ENCODE measurements at regions of chr12 and their contacts with region 1.

Region 1: DNA sequence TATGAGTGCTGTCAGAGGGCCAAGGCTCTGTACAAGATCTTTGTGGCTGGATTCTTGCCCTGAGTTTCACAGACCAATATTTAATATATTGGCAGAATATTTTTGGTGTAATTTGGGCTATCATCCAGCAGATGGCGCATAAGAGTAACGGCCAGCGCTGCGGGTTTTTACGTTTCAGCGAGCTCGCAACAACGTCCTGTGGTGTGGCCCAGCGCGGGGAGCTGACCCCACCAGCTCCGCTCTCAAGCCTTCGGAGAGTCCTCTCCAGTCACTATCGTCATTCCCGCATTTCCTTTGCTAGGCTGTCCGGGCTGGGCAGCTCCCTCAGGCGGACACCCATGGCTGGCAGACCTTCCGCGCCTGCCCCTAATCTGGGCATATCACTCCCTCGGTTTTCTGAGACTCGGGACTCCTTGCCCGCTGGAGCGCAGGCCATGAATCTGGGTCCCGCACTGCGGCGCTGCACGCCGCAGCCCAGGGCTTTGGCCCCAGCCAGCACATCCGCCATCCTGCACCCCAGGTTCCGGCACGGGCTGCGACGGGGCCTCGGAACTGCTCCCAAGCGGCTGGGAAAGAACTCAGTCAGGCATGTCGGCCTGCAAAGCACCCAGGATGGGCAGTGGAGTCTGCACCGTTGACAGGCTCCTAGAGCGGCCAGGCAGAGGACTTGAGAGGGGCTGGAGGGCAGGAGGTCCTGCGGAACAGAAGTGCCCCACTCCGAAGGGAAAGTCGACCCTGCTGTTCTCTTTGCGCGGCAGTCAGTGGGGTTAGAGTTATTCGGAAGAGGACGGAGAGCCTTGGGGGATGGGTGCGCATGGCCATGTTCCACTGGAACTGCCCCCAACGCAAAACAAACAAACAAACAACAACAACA is 18.4 kb downstream of the OLR1 start:
- DNase-seq: peak; percentile 75
- ATAC-seq: peak; percentile 83
- H3K4me3 Mint-ChIP-seq: peak overlapping the region; percentile 84
- H3K27ac Mint-ChIP-seq: peak overlapping the region; percentile 79
- H3K4me1 Mint-ChIP-seq: peaks cover 10% of the 10 kb centered on the region
- H3K27me3 Mint-ChIP-seq: peaks cover 18% of the 10 kb centered on the region

Region 2: DNA sequence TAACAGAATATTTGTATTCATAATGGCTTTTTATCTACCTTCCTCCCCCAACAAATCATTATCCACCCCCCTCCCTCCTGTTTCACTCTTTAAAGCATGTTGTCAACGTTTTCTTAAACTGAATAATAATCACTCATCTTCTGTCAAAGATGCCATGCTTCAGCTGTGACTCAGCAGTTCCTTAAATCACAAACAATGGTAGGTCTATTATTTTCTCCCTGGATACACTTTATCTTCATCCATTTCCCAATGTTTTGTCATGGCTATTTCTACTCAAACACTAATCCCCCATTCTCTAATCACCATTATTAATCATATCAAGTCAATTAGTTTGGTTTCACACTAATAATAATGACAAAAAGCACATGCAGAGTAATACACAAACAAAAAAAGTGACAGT is 136.6 kb before region 1 on chr12:
- CTCF ChIA-PET with region 1: no interaction called
- DNase-seq: no peak
- ATAC-seq: no peak
- H3K4me3 Mint-ChIP-seq: no peak overlapping the region
- H3K27ac Mint-ChIP-seq: no peak overlapping the region
- H3K4me1 Mint-ChIP-seq: no peaks in the 10 kb centered on the region
- H3K27me3 Mint-ChIP-seq: peaks cover 43% of the 10 kb centered on the region

Region 3: GRCh38 chr12:10140001-10140400 is 13.5 kb before region 1 on chr12:
- CTCF ChIA-PET with region 1: interaction called, 16 read pairs
- DNase-seq: peak; percentile 59
- ATAC-seq: no peak
- H3K4me3 Mint-ChIP-seq: no peak overlapping the region
- H3K27ac Mint-ChIP-seq: no peak overlapping the region
- H3K4me1 Mint-ChIP-seq: peaks cover 2% of the 10 kb centered on the region
- H3K27me3 Mint-ChIP-seq: peaks cover 22% of the 10 kb centered on the region

Region 4: DNA sequence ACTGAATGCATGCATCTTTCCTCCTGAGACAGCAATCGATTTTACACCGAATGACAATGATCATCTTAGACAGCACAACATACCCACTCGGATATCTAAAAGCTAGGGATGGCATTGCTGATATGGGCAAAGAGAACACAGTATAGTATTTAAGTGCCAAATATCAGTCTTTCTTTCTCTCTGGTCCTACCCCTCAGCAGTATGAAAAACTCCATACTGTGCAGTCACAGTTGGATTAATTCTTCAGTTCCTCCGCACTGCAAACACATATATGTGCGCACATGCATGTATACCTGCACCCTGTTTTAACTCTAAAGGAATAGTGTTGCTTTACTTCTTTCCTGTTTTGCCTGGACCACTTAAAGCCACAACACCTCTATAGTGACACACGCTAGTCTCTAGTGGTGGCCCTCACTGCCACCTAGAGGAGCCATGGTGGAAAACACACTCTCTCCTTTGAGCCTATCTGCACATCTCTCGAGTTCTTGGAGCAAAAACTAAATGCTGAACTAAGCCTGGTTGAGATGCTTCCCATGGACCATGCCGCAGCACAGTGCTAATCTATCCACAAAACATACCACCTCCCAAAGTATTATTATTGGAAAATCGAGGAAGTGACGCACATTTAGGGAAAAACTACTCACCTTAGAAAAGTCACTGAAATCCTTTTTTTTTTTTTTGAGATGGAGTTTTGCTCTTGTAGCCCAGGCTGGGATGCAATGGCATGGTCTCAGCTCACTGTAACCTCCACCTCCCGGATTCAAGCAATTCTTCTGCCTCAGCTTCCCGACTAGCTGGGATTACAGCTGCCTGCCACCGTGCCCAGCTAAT is 37.3 kb after region 1 on chr12:
- CTCF ChIA-PET with region 1: interaction called, 31 read pairs
- DNase-seq: peak; percentile 77
- ATAC-seq: peak; percentile 100
- H3K4me3 Mint-ChIP-seq: no peak overlapping the region
- H3K27ac Mint-ChIP-seq: no peak overlapping the region
- H3K4me1 Mint-ChIP-seq: peaks cover 7% of the 10 kb centered on the region
- H3K27me3 Mint-ChIP-seq: peaks cover 43% of the 10 kb centered on the region

Region 5: GRCh38 chr12:10196210-10196609 is 42.7 kb after region 1 on chr12:
- CTCF ChIA-PET with region 1: interaction called, 31 read pairs
- DNase-seq: peak; percentile 42
- ATAC-seq: peak; percentile 47
- H3K4me3 Mint-ChIP-seq: no peak overlapping the region
- H3K27ac Mint-ChIP-seq: no peak overlapping the region
- H3K4me1 Mint-ChIP-seq: peaks cover 10% of the 10 kb centered on the region
- H3K27me3 Mint-ChIP-seq: peaks cover 33% of the 10 kb centered on the region